Lower leg skin (tissue), 4 donors: ENCODE measurements at regions of chr17 and their contacts with region 1.

Region 1: GRCh38 chr17:50681263-50682210 is 26.2 kb downstream of the ANKRD40 start:
- DNase-seq: no peak
- H3K4me3 ChIP-seq: no peak overlapping the region
- CTCF ChIP-seq: no peak
- POLR2A ChIP-seq: no peak

Region 2: DNA sequence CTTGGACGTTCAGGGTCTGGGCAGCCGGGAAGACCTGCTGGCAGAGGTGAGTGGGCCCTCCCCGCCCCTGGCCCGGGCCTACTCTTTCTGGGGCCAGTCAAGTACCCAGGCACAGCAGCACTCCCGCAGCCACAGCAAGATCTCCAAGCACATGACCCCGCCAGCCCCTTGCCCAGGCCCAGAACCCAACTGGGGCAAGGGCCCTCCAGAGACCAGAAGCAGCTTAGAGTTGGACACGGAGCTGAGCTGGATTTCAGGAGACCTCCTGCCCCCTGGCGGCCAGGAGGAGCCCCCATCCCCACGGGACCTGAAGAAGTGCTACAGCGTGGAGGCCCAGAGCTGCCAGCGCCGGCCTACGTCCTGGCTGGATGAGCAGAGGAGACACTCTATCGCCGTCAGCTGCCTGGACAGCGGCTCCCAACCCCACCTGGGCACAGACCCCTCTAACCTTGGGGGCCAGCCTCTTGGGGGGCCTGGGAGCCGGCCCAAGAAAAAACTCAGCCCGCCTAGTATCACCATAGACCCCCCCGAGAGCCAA is 55.4 kb before region 1 on chr17:
- intact Hi-C with region 1: loop called (anchors 5 kb)
- DNase-seq: peak; percentile 64 to 95
- H3K4me3 ChIP-seq: no peak overlapping the region
- CTCF ChIP-seq: peak in 1 of 3 donors; percentile 27
- POLR2A ChIP-seq: no peak

Region 3: GRCh38 chr17:51491416-51491815 is 809.9 kb after region 1 on chr17:
- intact Hi-C with region 1: no loop called
- DNase-seq: no peak
- H3K4me3 ChIP-seq: no peak overlapping the region
- CTCF ChIP-seq: no peak
- POLR2A ChIP-seq: no peak